Head of caudate nucleus (tissue), 42 donors: ENCODE measurements at regions of chr9 and their contacts with region 1.

Region 1: DNA sequence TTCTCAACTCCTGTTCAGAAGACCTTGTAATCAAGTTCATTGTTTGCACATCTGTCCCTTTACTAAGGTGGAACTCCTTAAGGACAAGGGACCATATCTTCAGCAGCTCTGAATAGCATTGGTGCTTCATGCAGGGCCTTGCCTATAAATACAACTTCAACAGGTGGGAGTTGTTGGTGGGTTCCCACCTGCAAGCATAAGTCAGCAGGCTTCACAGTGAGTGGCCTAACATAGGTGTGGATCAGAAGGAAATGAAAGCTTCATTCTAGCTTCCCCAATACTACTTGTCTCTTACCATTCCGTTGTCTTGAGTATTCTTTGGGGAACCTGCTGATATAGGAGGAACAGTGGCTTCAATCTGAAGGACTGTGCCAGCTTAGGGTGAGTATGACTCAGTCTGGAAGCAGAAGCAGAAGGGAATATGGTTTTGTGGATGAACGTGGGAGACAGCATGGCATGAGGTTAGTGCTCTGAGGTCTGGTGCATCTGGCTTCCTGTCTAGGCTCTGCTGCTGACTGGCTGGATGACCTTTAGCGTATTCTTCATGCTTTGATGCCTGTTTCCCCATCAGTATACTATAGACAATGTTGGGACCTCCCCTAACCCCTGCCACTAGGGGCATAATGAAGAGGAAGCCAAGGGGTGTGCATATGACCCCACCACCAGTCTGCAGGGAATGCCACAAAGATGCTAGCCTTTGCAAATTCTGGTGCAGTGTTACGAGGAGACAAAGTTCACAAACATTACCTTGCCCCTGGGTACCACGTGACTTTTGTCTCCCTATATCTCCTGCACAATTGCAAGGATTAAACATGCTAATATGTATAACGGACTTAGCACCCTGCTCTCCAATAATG is 192.3 kb downstream of the PALM2AKAP2 start:
- DNase-seq: peak in 20 of 42 donors; percentile 6 to 51 (median 18)

Region 2: DNA sequence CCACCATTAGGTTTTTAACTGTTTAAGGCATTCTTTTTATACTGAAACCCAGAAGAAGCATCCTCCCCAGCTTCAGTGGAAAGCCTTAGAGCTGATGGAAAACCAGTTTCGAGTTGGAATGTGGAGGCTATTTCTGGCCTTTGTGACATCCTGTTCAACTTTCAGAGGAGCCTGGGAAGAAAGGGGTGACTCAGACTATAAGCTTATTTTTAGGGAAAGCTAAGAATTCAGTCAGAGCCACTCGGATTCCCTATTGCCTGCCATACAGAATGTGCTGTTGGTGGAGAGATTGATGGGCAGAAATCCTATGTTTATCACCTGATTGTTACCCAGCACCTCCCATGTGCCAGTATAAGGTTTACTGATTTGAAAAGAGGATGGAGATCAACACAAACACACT is 172.5 kb before region 1 on chr9:
- intact Hi-C with region 1: no loop called
- DNase-seq: no peak

Region 3: DNA sequence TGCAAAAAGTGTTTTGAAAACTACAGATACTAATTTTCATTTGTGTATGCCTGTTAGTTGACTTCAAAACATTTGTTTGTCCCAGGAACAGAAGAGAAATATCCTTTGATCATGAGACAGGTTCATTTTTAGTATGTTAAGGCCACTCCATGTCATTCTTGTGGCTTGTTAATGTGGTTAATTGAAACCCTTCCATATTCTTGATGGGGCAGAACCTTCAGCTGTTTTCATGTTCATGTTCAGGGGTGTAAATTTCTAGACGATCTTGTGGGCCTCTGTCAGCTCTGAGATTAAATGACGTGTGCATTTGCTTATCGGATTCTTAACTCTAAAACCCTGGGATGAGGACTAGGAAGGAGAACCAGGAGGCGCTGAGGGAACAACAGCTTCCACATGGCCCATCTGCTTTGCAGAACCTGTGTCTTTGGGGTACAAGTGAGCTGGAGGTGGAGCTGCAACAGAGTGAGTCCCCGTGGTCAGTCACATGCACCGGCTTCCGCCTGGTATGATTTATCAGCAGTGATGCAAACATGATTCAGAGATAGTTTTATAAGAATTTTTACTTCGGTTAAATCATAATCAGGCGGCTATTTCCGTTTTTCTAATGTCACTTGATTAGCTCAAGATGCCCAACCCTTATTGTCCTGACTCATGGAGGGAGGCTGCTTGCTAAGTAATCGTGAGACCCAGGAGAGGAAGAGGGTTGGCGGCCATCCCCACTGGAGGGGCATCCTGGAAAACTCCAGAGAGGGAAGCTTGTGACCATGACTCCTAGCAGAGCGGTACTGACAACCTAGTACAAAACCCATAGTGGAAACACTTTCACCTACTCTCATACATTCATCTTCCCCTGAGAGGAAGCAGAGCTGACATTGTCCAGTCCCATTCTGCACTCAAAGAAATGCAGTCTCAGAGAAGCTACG is 97.3 kb after region 1 on chr9:
- intact Hi-C with region 1: loop called (anchors 10 kb)
- DNase-seq: no peak